Vagina (tissue), 2 donors: ENCODE measurements at regions of chr1 and their contacts with region 1.

Region 1: DNA sequence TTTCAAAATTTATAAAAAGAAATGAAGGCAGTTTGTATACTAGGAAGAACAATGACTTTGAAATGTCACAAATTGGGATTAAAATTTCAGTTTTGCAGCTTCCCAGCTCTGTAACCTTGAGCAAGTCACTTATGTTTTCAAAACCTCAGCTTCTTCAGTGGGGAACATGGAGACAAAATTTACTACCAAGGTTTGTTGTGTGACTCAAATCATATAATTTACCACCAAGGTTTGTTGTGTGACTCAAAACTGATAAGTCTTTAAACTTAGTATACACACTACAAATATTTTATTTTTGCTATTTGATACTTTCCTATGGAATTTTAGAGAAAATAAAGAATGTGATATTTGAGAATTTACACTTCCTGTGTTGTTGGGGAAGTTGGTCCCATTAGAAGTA is 219.9 kb downstream of the KCTD3 start:
- DNase-seq: no peak
- H3K4me3 ChIP-seq: no peak overlapping the region
- H3K27ac ChIP-seq: no peak overlapping the region
- H3K4me1 ChIP-seq: no peaks in the 10 kb centered on the region
- H3K27me3 ChIP-seq: no peaks in the 10 kb centered on the region
- CTCF ChIP-seq: no peak
- POLR2A ChIP-seq: no peak

Region 2: DNA sequence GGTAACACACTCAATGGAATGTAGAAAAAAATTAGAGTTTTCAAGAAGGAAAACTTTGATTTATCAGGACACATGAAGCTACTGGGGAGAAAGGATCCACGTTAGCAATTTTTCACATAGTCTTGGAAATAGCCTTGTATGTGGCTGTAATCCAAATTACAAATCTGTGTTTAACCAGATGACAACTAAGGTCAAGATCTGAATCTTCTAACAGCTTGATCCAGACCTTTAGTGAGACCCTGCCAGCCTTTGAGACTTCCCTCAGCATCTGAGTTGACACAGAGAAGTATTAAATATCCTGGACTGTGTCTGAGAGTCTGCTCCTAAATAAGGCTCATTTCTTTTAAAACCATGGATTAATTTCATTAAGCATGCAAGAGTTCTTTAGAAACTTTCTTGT is 840.4 kb before region 1 on chr1:
- intact Hi-C with region 1: loop called (anchors 5 kb)
- DNase-seq: no peak
- H3K4me3 ChIP-seq: no peak overlapping the region
- H3K27ac ChIP-seq: no peak overlapping the region
- H3K4me1 ChIP-seq: no peaks in the 10 kb centered on the region
- H3K27me3 ChIP-seq: no peaks in the 10 kb centered on the region
- CTCF ChIP-seq: no peak
- POLR2A ChIP-seq: no peak

Region 3: DNA sequence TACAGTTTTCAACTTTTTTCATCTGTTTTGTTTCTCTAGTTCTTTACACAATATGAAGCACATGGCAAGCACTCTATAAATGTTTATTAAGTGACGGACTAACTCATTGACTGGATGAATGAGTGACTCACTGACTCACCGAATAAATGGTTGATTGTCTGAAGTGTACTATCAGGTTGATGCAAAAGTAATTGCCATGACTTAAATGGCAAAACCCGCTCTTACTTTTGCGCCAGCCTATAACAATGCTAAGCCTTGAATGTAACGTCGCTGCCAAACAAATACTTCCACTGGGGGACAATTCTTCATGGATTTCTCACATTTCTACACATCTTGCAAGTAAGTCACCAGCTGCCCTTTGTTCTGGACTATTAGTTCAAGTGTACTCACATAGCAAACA is 328.9 kb before region 1 on chr1:
- intact Hi-C with region 1: no loop called
- DNase-seq: no peak
- H3K4me3 ChIP-seq: no peak overlapping the region
- H3K27ac ChIP-seq: no peak overlapping the region
- H3K4me1 ChIP-seq: no peaks in the 10 kb centered on the region
- H3K27me3 ChIP-seq: no peaks in the 10 kb centered on the region
- CTCF ChIP-seq: no peak
- POLR2A ChIP-seq: no peak

Region 4: DNA sequence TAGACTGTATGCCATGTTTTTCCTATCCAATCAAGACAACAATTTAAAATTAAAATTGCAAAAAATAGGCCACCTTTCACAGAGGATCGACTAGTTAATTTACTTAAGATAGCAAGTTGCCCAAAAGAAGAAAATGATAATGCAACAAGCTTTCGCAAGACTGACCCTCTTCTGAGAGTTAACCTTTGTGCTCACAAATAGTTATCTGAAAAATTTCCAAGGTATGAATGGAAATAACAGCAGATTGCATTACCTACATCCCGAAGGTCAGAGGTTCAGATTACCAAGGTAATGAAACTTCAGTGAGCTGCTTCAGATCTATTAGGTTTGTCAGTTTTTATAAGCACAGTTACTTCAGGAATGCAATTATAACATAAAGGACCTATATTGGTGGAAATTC is 78.1 kb after region 1 on chr1:
- intact Hi-C with region 1: no loop called
- DNase-seq: no peak
- H3K4me3 ChIP-seq: no peak overlapping the region
- H3K27ac ChIP-seq: no peak overlapping the region
- H3K4me1 ChIP-seq: no peaks in the 10 kb centered on the region
- H3K27me3 ChIP-seq: no peaks in the 10 kb centered on the region
- CTCF ChIP-seq: no peak
- POLR2A ChIP-seq: no peak